Panc1 (cell line): ENCODE measurements at regions of chr16 and their contacts with region 1.

Region 1: GRCh38 chr16:86575754-86576557 is 2.4 kb upstream of the FOXL1 start:
- DNase-seq: no peak
- ATAC-seq: peak; percentile 68
- H3K4me3 ChIP-seq: peak overlapping the region; percentile 56 to 73
- H3K27ac ChIP-seq: peak overlapping the region; percentile 97
- H3K4me1 ChIP-seq: peaks cover 44% of the 10 kb centered on the region
- H3K27me3 ChIP-seq: no peaks in the 10 kb centered on the region
- CTCF ChIP-seq: peak; percentile 83

Region 2: DNA sequence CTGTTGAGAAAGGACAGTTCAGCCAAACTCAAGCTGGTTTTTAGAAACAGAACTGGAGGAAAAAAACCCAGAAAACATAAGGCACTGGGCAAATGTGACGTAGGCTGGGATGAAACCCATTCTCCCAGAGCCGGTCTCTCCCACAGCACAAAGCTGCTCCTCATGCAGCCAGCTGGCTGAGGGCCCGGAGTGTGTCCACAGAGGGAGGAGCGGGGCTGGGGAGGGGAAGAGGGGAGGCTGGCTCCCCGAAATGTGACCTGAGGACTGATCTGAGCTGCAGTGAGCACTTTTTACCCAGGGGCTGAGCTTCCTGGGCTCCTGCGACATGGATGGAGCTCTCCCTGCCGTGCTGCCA is 44.8 kb before region 1 on chr16:
- CTCF ChIA-PET with region 1: no interaction called
- POLR2A ChIA-PET with region 1: no interaction called
- in situ Hi-C with region 1: no loop called
- intact Hi-C with region 1: no loop called
- DNase-seq: no peak
- ATAC-seq: no peak
- H3K4me3 ChIP-seq: no peak overlapping the region
- H3K27ac ChIP-seq: no peak overlapping the region
- H3K4me1 ChIP-seq: no peaks in the 10 kb centered on the region
- H3K27me3 ChIP-seq: no peaks in the 10 kb centered on the region
- CTCF ChIP-seq: no peak

Region 3: DNA sequence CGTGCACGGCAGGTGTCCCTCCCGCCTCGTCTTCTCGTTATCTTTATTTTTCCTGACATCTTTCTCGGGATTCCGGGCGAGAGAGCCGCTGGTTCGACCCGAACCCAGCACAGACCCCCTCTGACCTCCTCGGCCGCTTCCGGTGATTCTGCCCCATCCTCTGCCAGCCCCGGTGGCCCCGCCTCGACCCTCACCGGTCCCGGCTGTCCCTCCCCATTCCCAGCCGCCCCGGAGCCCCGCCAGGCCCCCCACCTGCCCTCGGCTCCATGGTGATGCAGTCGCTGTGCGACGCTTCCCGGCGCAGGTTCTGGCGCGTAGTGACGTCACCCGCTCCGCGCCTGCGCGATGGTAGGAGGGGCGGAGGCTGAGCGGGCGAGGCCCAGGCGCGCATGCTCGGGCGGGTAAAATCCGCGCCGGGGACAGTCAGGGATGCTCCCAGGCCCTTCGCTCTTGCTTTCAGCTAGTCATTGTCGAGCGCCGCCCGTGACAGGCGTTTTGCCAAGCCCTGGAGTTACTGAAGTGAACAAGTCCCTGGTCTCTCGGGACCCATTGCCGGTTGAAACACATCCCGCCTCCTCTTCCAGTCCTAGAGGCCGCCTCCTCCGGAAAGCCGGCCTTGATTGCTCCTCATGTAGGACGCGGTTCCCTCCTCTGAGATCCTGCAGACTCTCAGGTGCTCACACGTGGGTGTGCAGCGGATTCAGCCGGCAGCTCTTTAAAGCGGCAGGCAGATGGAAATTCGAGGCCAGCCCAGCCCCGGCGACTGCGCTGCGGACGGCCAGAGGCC is 20.8 kb before region 1 on chr16 and contains the start of gene MTHFSD:
- CTCF ChIA-PET with region 1: no interaction called
- POLR2A ChIA-PET with region 1: no interaction called
- in situ Hi-C with region 1: no loop called
- intact Hi-C with region 1: no loop called
- DNase-seq: no peak
- ATAC-seq: peak; percentile 97
- H3K4me3 ChIP-seq: peak within 1 kb of the TSS; percentile 87 to 89
- H3K27ac ChIP-seq: peak within 1 kb of the TSS; percentile 90
- H3K4me1 ChIP-seq: peaks cover 6% of the 10 kb centered on the region
- H3K27me3 ChIP-seq: no peaks in the 10 kb centered on the region
- CTCF ChIP-seq: no peak
- total RNA-seq, gene MTHFSD: 16.5 TPM

Region 4: GRCh38 chr16:86620184-86620583 is 44.2 kb after region 1 on chr16:
- CTCF ChIA-PET with region 1: no interaction called
- POLR2A ChIA-PET with region 1: interaction called, 12 read pairs
- in situ Hi-C with region 1: no loop called
- intact Hi-C with region 1: no loop called
- DNase-seq: no peak
- ATAC-seq: no peak
- H3K4me3 ChIP-seq: no peak overlapping the region
- H3K27ac ChIP-seq: no peak overlapping the region
- H3K4me1 ChIP-seq: peaks cover 6% of the 10 kb centered on the region
- H3K27me3 ChIP-seq: no peaks in the 10 kb centered on the region
- CTCF ChIP-seq: no peak

Region 5: GRCh38 chr16:86668136-86668910 is 92.4 kb after region 1 on chr16:
- CTCF ChIA-PET with region 1: interaction called, 11 read pairs
- POLR2A ChIA-PET with region 1: interaction called, 5 read pairs
- in situ Hi-C with region 1: no loop called
- intact Hi-C with region 1: no loop called
- DNase-seq: no peak
- ATAC-seq: no peak
- H3K4me3 ChIP-seq: no peak overlapping the region
- H3K27ac ChIP-seq: no peak overlapping the region
- H3K4me1 ChIP-seq: peaks cover 16% of the 10 kb centered on the region
- H3K27me3 ChIP-seq: no peaks in the 10 kb centered on the region
- CTCF ChIP-seq: no peak

Region 6: DNA sequence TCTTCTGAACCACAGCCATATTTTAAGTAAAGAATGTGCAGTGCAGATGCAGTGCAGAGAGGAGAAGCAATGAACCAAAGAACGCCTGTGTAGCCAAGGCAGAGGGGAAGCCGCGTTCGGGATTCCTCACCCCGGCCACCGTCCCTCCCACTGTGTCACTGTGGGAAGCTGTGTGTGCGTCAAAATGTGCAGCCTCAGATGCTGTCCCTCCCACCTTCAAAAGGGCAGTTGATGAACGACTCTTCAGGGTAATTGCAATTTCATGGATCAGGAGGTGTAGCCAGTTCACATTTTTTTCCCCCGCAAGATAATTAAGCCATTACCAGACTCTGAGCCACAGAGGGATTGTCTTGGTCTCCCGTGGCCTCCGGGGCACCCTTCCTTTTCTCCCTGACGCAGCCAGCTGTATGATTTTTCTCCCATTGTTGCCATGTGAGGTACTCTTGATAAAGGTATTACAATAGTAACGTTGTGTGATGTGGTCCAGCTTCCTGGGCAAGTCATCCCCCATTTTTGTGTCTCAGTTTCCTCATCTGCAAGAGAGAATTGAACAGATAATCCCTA is 192.4 kb after region 1 on chr16:
- CTCF ChIA-PET with region 1: interaction called, 15 read pairs
- POLR2A ChIA-PET with region 1: no interaction called
- in situ Hi-C with region 1: no loop called
- intact Hi-C with region 1: no loop called
- DNase-seq: no peak
- ATAC-seq: no peak
- H3K4me3 ChIP-seq: no peak overlapping the region
- H3K27ac ChIP-seq: no peak overlapping the region
- H3K4me1 ChIP-seq: no peaks in the 10 kb centered on the region
- H3K27me3 ChIP-seq: no peaks in the 10 kb centered on the region
- CTCF ChIP-seq: no peak

Region 7: DNA sequence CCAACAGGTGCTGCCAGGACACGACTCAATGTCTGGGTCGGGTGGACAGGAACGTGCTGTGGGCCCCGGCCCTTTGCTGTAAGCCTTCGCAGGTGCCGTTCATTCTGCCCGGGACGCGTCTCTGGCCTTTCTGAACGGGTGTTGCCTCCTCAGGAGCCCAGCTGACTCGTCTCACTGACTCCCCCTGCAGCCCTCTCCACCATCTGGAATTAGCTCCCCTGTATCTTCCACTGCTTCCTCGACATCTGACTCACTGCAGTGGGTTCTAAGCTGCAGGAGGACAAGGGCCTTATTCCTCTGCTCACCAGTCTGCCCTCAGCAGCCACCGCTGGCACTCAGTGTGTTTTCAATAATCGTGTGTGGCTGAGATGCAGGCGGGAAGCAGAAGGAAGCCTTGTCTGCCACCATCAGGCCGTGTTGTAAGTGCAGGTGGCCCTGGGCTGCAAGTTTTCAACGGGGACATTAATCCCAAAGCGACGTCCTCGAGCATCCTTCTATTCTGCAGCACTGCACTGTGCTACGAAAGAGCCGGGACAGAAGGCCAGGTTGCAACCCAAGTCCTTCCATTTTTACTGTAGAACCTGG is 258.6 kb after region 1 on chr16:
- CTCF ChIA-PET with region 1: interaction called, 10 read pairs
- POLR2A ChIA-PET with region 1: no interaction called
- in situ Hi-C with region 1: no loop called
- intact Hi-C with region 1: loop called (anchors 5 kb)
- DNase-seq: peak; percentile 47
- ATAC-seq: peak; percentile 89
- H3K4me3 ChIP-seq: no peak overlapping the region
- H3K27ac ChIP-seq: peak overlapping the region; percentile 39; the same call in 1 of the 2 replicates
- H3K4me1 ChIP-seq: peaks cover 6% of the 10 kb centered on the region
- H3K27me3 ChIP-seq: no peaks in the 10 kb centered on the region
- CTCF ChIP-seq: peak; percentile 80

Region 8: GRCh38 chr16:87076950-87077749 is 501.2 kb after region 1 on chr16:
- CTCF ChIA-PET with region 1: interaction called, 11 read pairs
- POLR2A ChIA-PET with region 1: no interaction called
- in situ Hi-C with region 1: no loop called
- intact Hi-C with region 1: no loop called
- DNase-seq: no peak
- ATAC-seq: peak; percentile 95
- H3K4me3 ChIP-seq: no peak overlapping the region
- H3K27ac ChIP-seq: no peak overlapping the region
- H3K4me1 ChIP-seq: no peaks in the 10 kb centered on the region
- H3K27me3 ChIP-seq: no peaks in the 10 kb centered on the region
- CTCF ChIP-seq: peak; percentile 89